Heart right ventricle (tissue), 16 donors: ENCODE measurements at regions of chrX and their contacts with region 1.

Region 1: DNA sequence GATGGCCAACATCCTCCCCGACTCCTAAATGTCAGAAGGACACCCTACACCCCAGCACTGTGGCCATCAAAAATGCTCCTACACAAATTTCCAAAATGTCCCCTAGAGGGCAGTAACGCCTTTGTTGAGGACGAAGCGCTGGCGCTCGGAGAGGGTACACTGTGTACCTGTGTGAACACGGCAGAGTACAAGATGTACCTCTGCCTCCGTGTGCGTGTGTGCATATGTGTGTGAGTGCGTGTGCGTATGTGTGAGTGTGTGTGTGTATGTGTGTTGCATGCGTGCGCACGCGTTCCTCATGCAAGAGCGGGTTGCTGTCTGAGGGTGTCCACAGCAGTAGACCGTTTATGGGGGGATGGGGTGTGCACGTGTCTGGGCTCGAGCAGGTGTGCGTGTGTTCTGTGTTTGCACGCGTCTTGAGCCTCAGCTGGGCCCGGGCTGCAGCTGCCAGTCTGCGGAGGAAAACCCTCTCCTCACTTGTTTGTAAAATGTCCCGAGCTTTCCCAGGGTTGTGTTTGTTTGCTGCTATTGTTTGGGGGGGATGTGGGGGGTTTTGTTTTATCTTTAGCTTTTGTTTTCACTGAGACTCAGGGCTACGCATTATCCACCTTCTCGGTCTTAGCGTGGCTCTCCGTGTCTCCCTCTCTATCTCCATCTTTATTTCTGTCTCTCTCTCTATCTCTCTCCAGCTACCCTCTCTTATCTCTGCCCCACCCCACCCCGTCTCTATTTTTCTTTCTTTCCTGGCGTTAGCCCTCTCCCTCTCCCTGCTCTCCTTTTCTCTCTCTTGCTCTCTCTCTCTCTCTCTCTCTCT is 10.4 kb upstream of the TSPYL2 start:
- DNase-seq: peak; percentile 42 to 46
- ATAC-seq: peak; percentile 63 to 96 (median 90)
- H3K4me3 ChIP-seq: peak overlapping the region in 9 of 10 donors; percentile 10 to 55 (median 45)
- H3K27ac ChIP-seq: no peak overlapping the region
- H3K4me1 ChIP-seq: peaks cover 0 to 11% (median 0%) of the 10 kb centered on the region in 9 donors
- H3K27me3 ChIP-seq: peaks cover 0 to 47% (median 0%) of the 10 kb centered on the region in 7 donors
- CTCF ChIP-seq: peak; percentile 34 to 72 (median 69)

Region 2: GRCh38 chrX:53088136-53088974 is 16.5 kb after region 1 on chrX:
- intact Hi-C with region 1: loop called in 5 of 10 experiments (anchors 1 to 2 kb)
- DNase-seq: peak; percentile 77 to 79
- ATAC-seq: peak; percentile 83 to 94 (median 90)
- H3K4me3 ChIP-seq: peak overlapping the region; percentile 10 to 58 (median 42)
- H3K27ac ChIP-seq: peak overlapping the region; percentile 51 to 88 (median 82)
- H3K4me1 ChIP-seq: peaks cover 0 to 23% (median 6%) of the 10 kb centered on the region in 9 donors
- H3K27me3 ChIP-seq: peaks cover 0 to 16% (median 0%) of the 10 kb centered on the region in 7 donors
- CTCF ChIP-seq: no peak

Region 3: DNA sequence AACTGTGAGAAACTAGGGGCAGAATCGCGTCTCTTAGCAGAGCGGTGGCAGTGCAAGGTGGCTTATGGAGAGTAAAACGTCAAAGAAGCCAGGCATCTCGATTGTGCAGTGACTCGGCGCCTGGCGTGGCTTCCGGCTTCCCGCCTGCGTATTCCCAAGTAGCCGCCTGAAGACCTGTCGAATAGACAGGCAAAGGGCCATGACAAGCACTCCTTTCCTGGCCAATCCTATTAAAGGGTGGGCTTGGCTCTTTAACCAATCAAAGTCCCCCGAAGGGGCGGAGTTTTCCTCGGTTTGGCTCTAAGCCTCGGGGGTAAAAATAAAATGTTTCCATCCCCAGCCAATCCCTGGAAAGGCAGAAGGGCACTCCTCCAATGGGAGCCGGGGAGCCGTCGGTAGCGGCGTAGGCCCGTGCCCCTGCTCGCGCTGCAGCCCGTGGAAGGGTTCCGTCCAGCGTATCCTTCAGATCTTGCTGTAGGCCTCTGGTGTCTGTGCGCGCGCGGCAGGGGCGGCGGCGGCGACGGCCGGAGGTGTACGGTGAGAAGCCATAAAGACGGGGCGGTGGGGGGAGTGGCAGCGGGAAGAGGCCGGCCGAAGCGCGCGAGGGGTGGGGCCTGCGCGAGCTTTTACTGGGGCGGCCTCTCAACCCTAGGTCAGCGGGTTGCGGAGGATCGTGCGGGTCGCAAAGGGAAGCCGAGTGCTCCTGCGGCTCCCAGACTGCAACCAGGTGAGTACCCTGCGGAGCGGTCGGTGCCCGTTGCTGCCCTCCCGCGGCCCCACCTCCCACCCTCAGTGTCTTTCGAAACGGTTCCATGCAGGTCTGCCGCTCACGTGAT is 22.2 kb after region 1 on chrX and contains the start of gene KANTR:
- intact Hi-C with region 1: loop called in 5 of 10 experiments (anchors 1 to 2 kb)
- DNase-seq: peak; percentile 74 to 92
- ATAC-seq: peak; percentile 89 to 97 (median 95)
- H3K4me3 ChIP-seq: peak within 1 kb of the TSS; percentile 47 to 78 (median 72)
- H3K27ac ChIP-seq: peak within 1 kb of the TSS; percentile 65 to 90 (median 86)
- H3K4me1 ChIP-seq: peaks cover 0 to 15% (median 8%) of the 10 kb centered on the region in 9 donors
- H3K27me3 ChIP-seq: peaks cover 0 to 4% (median 0%) of the 10 kb centered on the region in 7 donors
- CTCF ChIP-seq: peak in 3 of 9 donors; percentile 6 to 23 (median 12)
- total RNA-seq, gene KANTR: 2.7 to 11.5 (median 7.0) TPM

Region 4: GRCh38 chrX:53284684-53285447 is 213.1 kb after region 1 on chrX:
- intact Hi-C with region 1: no loop called
- DNase-seq: peak; percentile 40 to 54
- ATAC-seq: peak in 7 of 8 donors; percentile 28 to 46 (median 35)
- H3K4me3 ChIP-seq: no peak overlapping the region
- H3K27ac ChIP-seq: peak overlapping the region in 1 of 10 donors; percentile 22
- H3K4me1 ChIP-seq: peaks cover 8 to 60% (median 31%) of the 10 kb centered on the region in 9 donors
- H3K27me3 ChIP-seq: peaks cover 0 to 54% (median 0%) of the 10 kb centered on the region in 7 donors
- CTCF ChIP-seq: peak; percentile 52 to 90 (median 76)